A549 (cell line): ENCODE measurements at regions of chr19 and their contacts with region 1.

Region 1: GRCh38 chr19:49363268-49364082 is at the start of gene DKKL1:
- DNase-seq: peak; percentile 98 to 100
- ATAC-seq: peak; percentile 78 to 90
- H3K4me3 ChIP-seq: peak within 1 kb of the TSS; percentile 88
- H3K27ac ChIP-seq: peak within 1 kb of the TSS; percentile 87 to 90
- H3K4me1 ChIP-seq: peaks cover 15% of the 10 kb centered on the region; the same call in 2 of the 3 replicates
- CTCF ChIP-seq: peak; percentile 18; the same call in 1 of the 3 replicates
- EP300 ChIP-seq: no peak
- POLR2A ChIP-seq: peak; percentile 30; the same call in 1 of the 2 replicates
- RAD21 ChIP-seq: 0 out of 5 replicates have a peak, but pooled peaks of 1 of the 2 experiments have one; percentile 23
- polyA plus RNA-seq, gene DKKL1: 0.53 and 0.91 TPM in 2 replicates

Region 2: GRCh38 chr19:49347846-49348245 is 15.6 kb before region 1 on chr19:
- CTCF ChIA-PET with region 1: interaction called, 10 read pairs
- POLR2A ChIA-PET with region 1: interaction called, 3 read pairs
- DNase-seq: peak; percentile 81 to 92
- ATAC-seq: peak; percentile 88 to 97
- H3K4me3 ChIP-seq: no peak overlapping the region
- H3K27ac ChIP-seq: no peak overlapping the region
- H3K4me1 ChIP-seq: no peaks in the 10 kb centered on the region
- CTCF ChIP-seq: no peak; the same call in 2 of the 3 replicates
- EP300 ChIP-seq: no peak
- POLR2A ChIP-seq: no peak
- RAD21 ChIP-seq: no peak